ENCODE measurements at regions of chr3 and their contacts with region 1.

Region 1: GRCh38 chr3:138834359-138835212 is at the start of gene PIK3CB:
- DNase-seq: peak; percentile 78 to 94 (median 88)
- ATAC-seq: peak; percentile 86
- H3K4me3 ChIP-seq: peak within 1 kb of the TSS; percentile 92
- H3K4me3 Mint-ChIP-seq: peak within 1 kb of the TSS; percentile 94
- H3K27ac ChIP-seq: peak within 1 kb of the TSS; percentile 68 to 81
- H3K27ac Mint-ChIP-seq: peak within 1 kb of the TSS; percentile 96
- H3K4me1 ChIP-seq: peaks cover 36% of the 10 kb centered on the region
- H3K4me1 Mint-ChIP-seq: peaks cover 31% of the 10 kb centered on the region
- H3K27me3 ChIP-seq: no peaks in the 10 kb centered on the region
- H3K27me3 Mint-ChIP-seq: no peaks in the 10 kb centered on the region
- CTCF ChIP-seq: peak; percentile 39
- total RNA-seq, gene PIK3CB: 23.0 to 26.4 TPM

Region 2: DNA sequence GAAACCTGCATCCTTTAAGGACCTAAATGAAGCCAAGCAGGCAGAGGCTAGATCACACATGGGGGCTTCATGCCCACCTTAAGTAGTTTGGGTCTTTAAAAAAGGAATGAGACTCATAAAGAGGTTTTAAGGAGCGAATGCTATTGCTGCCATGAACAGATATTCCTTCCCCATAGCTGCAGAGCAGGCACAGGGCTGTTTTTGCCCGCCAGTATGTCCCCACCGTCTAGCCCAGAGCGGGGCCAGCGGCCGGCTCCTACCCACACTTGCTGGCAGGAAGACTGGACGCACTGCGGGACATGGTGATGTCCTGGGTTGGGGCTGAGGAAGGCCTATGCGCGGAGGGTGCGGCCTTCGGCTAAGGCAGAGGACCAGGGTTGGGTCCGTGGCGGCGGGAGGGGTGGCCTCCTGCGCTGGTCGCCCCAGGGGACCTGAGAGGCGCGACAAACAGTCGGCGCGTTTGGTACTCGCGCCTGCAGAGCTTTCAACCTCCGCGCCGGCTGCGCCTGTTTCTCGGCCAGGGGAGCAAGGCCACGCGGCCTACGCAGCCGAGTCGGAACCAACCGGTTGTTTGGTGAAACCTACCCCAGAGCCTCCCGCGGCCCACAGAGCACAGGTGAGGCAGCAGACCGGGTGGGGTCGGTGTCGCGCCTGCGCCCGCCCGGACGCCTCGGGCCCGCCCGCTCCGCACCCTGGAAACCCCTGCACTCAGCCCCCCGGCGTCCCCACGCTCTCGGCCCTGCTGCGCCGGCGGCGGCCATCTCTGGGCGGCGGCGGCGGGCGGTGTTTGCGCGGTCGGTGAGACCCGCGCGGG is 226.1 kb before region 1 on chr3 and contains the start of gene FAIM:
- CTCF ChIA-PET with region 1: no interaction called
- POLR2A ChIA-PET with region 1: no interaction called
- intact Hi-C with region 1: loop called in 1 of 2 experiments (anchors 5 kb)
- DNase-seq: peak; percentile 43 to 81 (median 60)
- ATAC-seq: peak; percentile 70
- H3K4me3 ChIP-seq: peak within 1 kb of the TSS; percentile 70
- H3K4me3 Mint-ChIP-seq: peak within 1 kb of the TSS; percentile 94
- H3K27ac ChIP-seq: peak within 1 kb of the TSS; percentile 56 to 75
- H3K27ac Mint-ChIP-seq: peak within 1 kb of the TSS; percentile 98
- H3K4me1 ChIP-seq: peaks cover 15% of the 10 kb centered on the region
- H3K4me1 Mint-ChIP-seq: peaks cover 22% of the 10 kb centered on the region
- H3K27me3 ChIP-seq: no peaks in the 10 kb centered on the region
- H3K27me3 Mint-ChIP-seq: peaks cover 6% of the 10 kb centered on the region
- CTCF ChIP-seq: no peak
- total RNA-seq, gene FAIM: 1.5 to 1.6 TPM

Region 3: DNA sequence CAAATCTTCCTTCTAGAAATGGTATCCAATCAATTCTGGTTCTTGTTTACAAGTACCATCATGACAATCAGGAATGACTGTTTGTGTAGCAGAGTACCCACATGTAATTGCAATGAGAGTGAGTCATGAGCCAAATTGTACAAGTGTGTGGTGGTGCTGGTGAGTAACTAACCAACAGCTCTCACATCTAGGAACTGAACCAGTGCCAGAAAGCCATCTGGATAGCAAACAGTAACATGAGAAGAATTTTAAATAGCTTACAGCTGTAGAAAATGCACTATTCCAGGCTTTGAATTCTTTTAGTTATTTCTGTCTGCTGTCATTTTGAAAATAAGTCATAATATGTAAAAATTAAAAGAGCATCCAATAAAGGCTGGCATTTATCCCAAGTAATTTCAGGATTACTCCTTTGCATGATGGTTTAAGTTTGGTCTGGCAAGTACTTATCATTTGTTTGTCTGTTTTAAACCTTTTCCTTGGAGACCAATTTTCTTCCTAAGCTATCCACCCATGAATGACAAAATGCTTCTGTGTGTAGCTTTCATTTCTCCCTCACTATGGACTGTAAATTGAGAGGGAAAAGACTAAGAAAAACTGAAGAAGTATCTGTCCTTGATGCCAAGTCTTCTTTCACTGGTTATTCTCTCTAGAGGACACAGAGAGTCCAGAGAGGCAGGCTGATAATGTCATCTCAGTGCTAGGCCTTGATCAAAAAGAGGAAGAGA is 59.9 kb before region 1 on chr3:
- CTCF ChIA-PET with region 1: no interaction called
- POLR2A ChIA-PET with region 1: interaction called, 3 read pairs
- intact Hi-C with region 1: loop called in 1 of 2 experiments (anchors 5 kb)
- DNase-seq: peak in 4 of 14 experiments; percentile 5 to 50 (median 30)
- ATAC-seq: peak; percentile 24
- H3K4me3 ChIP-seq: no peak overlapping the region
- H3K4me3 Mint-ChIP-seq: no peak overlapping the region
- H3K27ac ChIP-seq: no peak overlapping the region
- H3K27ac Mint-ChIP-seq: peak overlapping the region; percentile 40
- H3K4me1 ChIP-seq: peaks cover 4% of the 10 kb centered on the region
- H3K4me1 Mint-ChIP-seq: peaks cover 46% of the 10 kb centered on the region
- H3K27me3 ChIP-seq: no peaks in the 10 kb centered on the region
- H3K27me3 Mint-ChIP-seq: no peaks in the 10 kb centered on the region
- CTCF ChIP-seq: no peak

Region 4: DNA sequence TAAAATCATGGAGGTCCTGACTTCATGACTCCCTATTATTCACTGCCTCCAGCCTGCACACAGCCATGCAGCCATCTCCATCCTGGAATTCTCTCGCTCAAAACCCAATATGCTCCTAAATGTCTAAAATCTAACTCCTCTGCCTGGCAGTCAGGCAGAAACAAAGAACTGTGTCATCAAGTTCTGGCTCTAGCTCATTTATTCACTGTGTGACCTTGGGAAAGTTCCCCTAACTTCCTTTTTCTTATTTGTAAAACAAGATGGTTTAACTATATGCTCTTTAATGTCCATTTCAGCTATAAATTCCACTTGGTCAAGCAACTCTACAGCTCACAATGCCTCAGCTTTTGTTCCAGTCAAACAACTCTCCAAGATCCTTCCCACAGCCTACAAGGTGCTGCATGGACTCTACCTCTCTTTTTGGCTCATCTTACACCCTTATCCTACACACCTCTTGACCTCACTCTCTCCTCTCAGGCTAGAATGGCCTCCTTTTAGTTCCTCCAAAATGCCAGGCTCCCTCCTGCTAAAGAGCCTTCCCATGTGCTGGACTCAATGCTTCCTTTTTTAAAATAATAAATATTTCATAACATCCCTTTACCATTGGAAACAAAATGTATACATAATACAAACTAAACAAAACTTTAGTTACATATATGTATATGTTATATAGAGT is 16.3 kb before region 1 on chr3:
- CTCF ChIA-PET with region 1: interaction called, 3 read pairs
- POLR2A ChIA-PET with region 1: interaction called, 13 read pairs
- intact Hi-C with region 1: loop called in 1 of 2 experiments (anchors 2 kb)
- DNase-seq: no peak
- ATAC-seq: no peak
- H3K4me3 ChIP-seq: no peak overlapping the region
- H3K4me3 Mint-ChIP-seq: no peak overlapping the region
- H3K27ac ChIP-seq: no peak overlapping the region
- H3K27ac Mint-ChIP-seq: peak overlapping the region; percentile 34
- H3K4me1 ChIP-seq: peaks cover 27% of the 10 kb centered on the region
- H3K4me1 Mint-ChIP-seq: peaks cover 44% of the 10 kb centered on the region
- H3K27me3 ChIP-seq: no peaks in the 10 kb centered on the region
- H3K27me3 Mint-ChIP-seq: no peaks in the 10 kb centered on the region
- CTCF ChIP-seq: no peak

Region 5: DNA sequence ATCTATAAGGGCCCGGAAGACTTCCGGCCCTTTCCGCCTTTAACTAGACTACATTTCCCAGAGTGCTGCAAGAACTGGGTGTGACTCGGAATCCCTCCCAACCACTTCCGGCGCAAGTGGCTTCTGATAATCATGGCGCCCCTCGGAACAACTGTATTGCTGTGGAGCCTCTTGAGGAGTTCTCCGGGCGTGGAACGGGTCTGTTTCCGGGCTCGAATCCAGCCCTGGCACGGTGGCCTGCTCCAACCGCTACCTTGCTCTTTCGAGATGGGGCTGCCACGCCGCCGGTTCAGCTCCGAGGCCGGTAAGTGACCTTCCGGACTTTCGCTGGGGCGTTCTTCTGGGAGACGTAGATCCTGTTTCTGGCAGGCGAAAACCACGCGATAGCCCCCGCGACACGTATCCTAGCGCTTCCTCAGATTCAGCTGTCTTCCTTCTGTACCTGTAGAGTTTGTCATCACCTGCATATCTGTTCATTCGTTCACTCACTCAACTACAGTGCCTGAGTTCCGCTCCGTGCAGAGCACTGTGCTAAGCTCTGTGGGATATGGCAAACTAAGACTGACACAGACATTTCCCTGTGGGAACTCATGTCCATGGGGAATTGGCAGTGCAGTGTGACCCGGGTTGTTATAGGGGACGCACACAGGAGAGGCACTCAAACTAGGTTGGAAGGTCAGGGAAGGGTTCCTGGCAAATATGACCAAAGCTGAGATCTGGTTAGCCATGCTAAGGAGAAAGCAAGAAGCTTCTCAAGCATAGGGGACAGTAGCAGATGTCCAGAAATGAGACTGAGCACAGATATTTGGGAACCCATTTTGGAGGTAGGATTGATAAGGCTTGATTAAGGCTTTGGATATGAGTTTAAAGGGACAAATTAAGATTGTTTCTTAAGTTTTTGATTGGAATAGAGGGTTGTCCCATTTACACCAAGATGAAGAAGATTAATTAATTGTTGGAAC is 509.6 kb after region 1 on chr3 and contains the start of gene MRPS22:
- CTCF ChIA-PET with region 1: no interaction called
- POLR2A ChIA-PET with region 1: no interaction called
- intact Hi-C with region 1: loop called in 1 of 2 experiments (anchors 10 kb)
- DNase-seq: peak; percentile 64 to 92 (median 75)
- ATAC-seq: peak; percentile 98
- H3K4me3 ChIP-seq: peak within 1 kb of the TSS; percentile 92
- H3K4me3 Mint-ChIP-seq: no peak within 1 kb of the TSS
- H3K27ac ChIP-seq: peak within 1 kb of the TSS; percentile 73 to 93
- H3K27ac Mint-ChIP-seq: no peak within 1 kb of the TSS
- H3K4me1 ChIP-seq: peaks cover 21% of the 10 kb centered on the region
- H3K4me1 Mint-ChIP-seq: peaks cover 5% of the 10 kb centered on the region
- H3K27me3 ChIP-seq: no peaks in the 10 kb centered on the region
- H3K27me3 Mint-ChIP-seq: peaks cover 8% of the 10 kb centered on the region
- CTCF ChIP-seq: no peak
- total RNA-seq, gene MRPS22: 39.6 to 42.6 TPM